ENCODE measurements at regions of chr15 and their contacts with region 1.

Region 1: GRCh38 chr15:94991718-94992117 is 760.4 kb downstream of the MCTP2 start:
- DNase-seq: no peak
- H3K4me3 ChIP-seq: no peak overlapping the region
- H3K27ac ChIP-seq: no peak overlapping the region
- H3K4me1 ChIP-seq: no peaks in the 10 kb centered on the region
- H3K27me3 ChIP-seq: no peaks in the 10 kb centered on the region
- CTCF ChIP-seq: no peak
- POLR2A ChIP-seq: no peak

Region 2: DNA sequence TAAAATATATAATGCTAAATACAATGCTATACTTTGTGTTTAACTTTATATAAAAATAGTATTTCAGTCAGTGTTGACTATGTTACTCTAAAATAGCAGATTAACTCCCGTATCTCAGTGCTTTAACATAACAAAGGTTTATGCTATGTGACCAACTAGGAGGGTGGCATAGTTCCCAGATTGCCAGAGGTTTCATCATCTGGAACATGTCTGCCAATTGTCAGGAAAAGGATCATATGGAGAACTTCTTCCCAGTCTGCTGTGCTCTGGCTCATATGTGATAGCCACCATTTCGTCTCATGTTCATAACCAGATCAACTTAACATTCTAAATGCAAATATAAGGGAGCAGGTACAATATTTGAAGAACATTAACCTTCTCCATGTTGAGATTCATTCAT is 40.2 kb before region 1 on chr15:
- intact Hi-C with region 1: loop called (anchors 5 kb)
- DNase-seq: no peak
- H3K4me3 ChIP-seq: no peak overlapping the region
- H3K27ac ChIP-seq: no peak overlapping the region
- H3K4me1 ChIP-seq: no peaks in the 10 kb centered on the region
- H3K27me3 ChIP-seq: no peaks in the 10 kb centered on the region
- CTCF ChIP-seq: no peak
- POLR2A ChIP-seq: no peak

Region 3: DNA sequence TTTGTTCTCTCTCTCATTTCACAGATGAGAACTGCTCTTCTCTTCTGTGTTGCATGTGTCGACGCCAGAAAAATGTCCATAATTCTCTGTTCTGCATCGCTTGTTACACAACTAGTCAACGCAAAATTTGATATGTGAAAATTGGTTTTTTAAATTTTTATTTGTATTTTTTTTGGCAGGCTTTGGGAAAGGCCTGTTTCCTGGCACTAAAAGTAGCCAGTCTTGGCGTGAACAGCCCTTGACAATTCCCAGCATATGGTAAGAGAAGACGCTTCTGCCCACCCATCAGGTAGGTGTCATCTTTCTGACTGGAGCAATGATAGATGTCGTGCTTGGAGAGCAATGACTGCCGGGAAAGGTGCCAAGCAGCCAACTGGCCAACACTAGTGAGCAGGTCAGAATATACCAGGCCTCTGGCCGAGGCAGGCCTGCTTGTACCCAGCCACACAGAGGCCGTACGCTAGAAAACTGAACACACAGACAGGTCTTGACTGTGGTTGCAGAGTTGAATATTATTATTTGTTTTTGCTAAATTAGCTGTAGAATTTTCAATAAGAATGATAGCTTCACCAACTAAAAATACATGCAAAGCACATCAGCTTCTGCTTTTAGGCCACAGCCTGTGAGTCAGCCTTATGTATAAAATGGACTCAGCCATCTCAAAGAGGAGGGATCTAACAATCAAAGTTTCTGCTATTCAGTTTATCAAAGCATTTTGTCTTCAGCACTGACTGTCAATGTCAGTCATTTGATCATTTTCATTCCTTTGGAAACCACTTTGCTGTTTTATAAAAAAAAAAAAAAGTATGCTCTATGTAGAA is 77.2 kb after region 1 on chr15:
- intact Hi-C with region 1: no loop called
- DNase-seq: no peak
- H3K4me3 ChIP-seq: no peak overlapping the region
- H3K27ac ChIP-seq: no peak overlapping the region
- H3K4me1 ChIP-seq: no peaks in the 10 kb centered on the region
- H3K27me3 ChIP-seq: no peaks in the 10 kb centered on the region
- CTCF ChIP-seq: no peak
- POLR2A ChIP-seq: no peak

Region 4: GRCh38 chr15:95417761-95418160 is 426.0 kb after region 1 on chr15:
- intact Hi-C with region 1: no loop called
- DNase-seq: no peak
- H3K4me3 ChIP-seq: no peak overlapping the region
- H3K27ac ChIP-seq: no peak overlapping the region
- H3K4me1 ChIP-seq: no peaks in the 10 kb centered on the region
- H3K27me3 ChIP-seq: no peaks in the 10 kb centered on the region
- CTCF ChIP-seq: no peak
- POLR2A ChIP-seq: no peak

Region 5: GRCh38 chr15:95470997-95471689 is 479.4 kb after region 1 on chr15:
- intact Hi-C with region 1: no loop called
- DNase-seq: no peak
- H3K4me3 ChIP-seq: no peak overlapping the region
- H3K27ac ChIP-seq: no peak overlapping the region
- H3K4me1 ChIP-seq: no peaks in the 10 kb centered on the region
- H3K27me3 ChIP-seq: no peaks in the 10 kb centered on the region
- CTCF ChIP-seq: no peak
- POLR2A ChIP-seq: no peak